SK-N-SH (cell line): ENCODE measurements at regions of chr5 and their contacts with region 1.

Region 1: GRCh38 chr5:133514456-133514855 is 97.9 kb downstream of the FSTL4 start:
- DNase-seq: no peak
- H3K4me3 ChIP-seq: no peak overlapping the region
- H3K27ac ChIP-seq: no peak overlapping the region
- H3K4me1 ChIP-seq: peaks cover 0 to 3% of the 10 kb centered on the region in 2 experiments; a peak in 1 of 4 replicates
- H3K27me3 ChIP-seq: no peaks in the 10 kb centered on the region; the same call in 1 of the 2 replicates
- CTCF ChIP-seq: no peak
- EP300 ChIP-seq: no peak
- RAD21 ChIP-seq: no peak

Region 2: DNA sequence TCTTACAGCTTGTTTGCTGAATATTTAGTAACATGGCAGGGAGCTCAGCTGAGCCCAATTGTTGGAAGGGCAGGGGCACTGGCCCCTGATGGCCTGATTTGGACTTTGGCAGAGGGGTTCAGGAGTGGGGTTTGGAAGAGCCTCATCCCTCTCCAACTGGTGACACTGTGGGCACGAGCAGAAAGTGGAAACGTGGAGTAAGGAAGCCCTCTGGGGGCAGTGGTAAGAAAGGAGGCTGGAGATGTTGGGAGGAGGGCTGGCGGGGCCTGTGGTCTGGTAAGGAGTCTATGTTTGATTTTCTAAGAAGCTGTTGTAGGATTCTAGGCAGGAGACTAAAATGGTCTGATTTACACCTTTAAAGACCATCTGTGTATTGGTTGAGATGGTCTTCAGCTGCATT is 253.7 kb before region 1 on chr5:
- CTCF ChIA-PET with region 1: no interaction called
- POLR2A ChIA-PET with region 1: no interaction called
- DNase-seq: no peak
- H3K4me3 ChIP-seq: no peak overlapping the region
- H3K27ac ChIP-seq: no peak overlapping the region
- H3K4me1 ChIP-seq: no peaks in the 10 kb centered on the region
- H3K27me3 ChIP-seq: peaks cover 12% of the 10 kb centered on the region; the same call in 1 of the 2 replicates
- CTCF ChIP-seq: peak; percentile 27; the same call in 1 of the 2 replicates
- EP300 ChIP-seq: no peak
- RAD21 ChIP-seq: peak; percentile 49

Region 3: DNA sequence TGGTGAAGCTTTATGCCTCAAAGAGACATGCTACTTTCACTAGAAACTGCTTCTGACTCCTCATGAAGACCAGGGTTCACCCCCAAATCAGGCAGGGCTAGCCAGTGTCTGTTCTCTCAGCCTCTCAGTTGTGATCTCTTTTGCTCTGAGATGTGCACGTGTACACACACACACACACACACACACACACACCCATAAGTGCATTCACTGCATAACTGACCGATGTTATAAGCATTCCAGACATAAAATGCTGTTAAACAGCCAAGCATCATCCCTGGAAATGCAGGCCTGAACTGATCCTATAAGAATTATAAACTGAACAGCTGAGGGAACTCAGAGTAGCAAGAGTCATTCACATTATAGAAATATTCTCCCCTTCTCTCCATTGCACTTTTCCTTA is 12.9 kb after region 1 on chr5:
- CTCF ChIA-PET with region 1: interaction called, 13 read pairs
- POLR2A ChIA-PET with region 1: interaction called, 4 read pairs
- DNase-seq: no peak
- H3K4me3 ChIP-seq: no peak overlapping the region
- H3K27ac ChIP-seq: no peak overlapping the region
- H3K4me1 ChIP-seq: peaks cover 0 to 3% of the 10 kb centered on the region in 2 experiments; a peak in 1 of 4 replicates
- H3K27me3 ChIP-seq: no peaks in the 10 kb centered on the region; the same call in 1 of the 2 replicates
- CTCF ChIP-seq: no peak
- EP300 ChIP-seq: no peak
- RAD21 ChIP-seq: no peak